Dorsolateral prefrontal cortex (tissue), 120 donors: ENCODE measurements at regions of chr11 and their contacts with region 1.

Region 1: GRCh38 chr11:73542175-73542574 is 55.7 kb downstream of the FAM168A start:
- DNase-seq: no peak
- H3K4me3 ChIP-seq: no peak overlapping the region
- H3K27ac ChIP-seq: no peak overlapping the region
- H3K27me3 ChIP-seq: no peaks in the 10 kb centered on the region
- CTCF ChIP-seq: no peak

Region 2: GRCh38 chr11:72930008-72930407 is 612.2 kb before region 1 on chr11:
- intact Hi-C with region 1: no loop called
- DNase-seq: no peak
- H3K4me3 ChIP-seq: no peak overlapping the region
- H3K27ac ChIP-seq: peak overlapping the region in 2 of 59 donors; percentile 22 to 30
- H3K27me3 ChIP-seq: no peaks in the 10 kb centered on the region
- CTCF ChIP-seq: no peak

Region 3: DNA sequence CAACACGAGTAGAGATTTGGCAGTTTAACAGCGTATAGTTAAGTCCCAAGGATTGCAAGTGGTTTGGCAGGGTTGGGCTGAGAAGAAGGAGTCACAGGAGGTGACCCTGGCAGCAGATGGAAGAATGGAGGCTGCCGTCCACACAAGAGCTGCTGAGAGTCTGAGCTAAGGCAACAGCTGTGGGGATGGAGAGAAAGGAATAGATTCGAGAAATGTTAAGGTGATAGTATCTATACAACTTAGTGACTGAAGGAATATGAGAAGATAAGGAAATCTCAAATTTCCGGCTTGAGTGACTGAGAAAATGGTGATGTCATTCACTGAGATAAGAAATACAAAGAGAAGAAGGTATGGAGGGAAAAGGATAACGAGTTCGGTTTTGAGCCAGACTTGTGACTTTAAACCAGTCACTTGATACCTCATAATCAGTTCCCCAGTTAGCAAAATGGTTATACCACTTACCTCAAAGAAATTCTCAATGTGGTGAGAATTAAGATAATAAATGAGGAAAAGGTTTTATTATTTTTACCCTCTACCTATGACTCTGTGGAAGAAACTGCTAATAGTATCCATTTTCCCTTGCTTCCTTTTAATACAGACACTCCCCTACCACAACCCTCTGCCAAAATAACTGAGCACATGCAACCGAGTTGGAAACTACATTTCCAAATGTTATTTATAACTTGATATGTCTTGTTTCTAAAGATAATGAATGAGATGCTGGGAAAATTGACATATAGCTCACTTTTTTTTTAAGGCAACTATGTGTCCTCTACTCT is 25.0 kb after region 1 on chr11:
- intact Hi-C with region 1: no loop called
- DNase-seq: no peak
- H3K4me3 ChIP-seq: no peak overlapping the region
- H3K27ac ChIP-seq: no peak overlapping the region
- H3K27me3 ChIP-seq: no peaks in the 10 kb centered on the region
- CTCF ChIP-seq: no peak

Region 4: DNA sequence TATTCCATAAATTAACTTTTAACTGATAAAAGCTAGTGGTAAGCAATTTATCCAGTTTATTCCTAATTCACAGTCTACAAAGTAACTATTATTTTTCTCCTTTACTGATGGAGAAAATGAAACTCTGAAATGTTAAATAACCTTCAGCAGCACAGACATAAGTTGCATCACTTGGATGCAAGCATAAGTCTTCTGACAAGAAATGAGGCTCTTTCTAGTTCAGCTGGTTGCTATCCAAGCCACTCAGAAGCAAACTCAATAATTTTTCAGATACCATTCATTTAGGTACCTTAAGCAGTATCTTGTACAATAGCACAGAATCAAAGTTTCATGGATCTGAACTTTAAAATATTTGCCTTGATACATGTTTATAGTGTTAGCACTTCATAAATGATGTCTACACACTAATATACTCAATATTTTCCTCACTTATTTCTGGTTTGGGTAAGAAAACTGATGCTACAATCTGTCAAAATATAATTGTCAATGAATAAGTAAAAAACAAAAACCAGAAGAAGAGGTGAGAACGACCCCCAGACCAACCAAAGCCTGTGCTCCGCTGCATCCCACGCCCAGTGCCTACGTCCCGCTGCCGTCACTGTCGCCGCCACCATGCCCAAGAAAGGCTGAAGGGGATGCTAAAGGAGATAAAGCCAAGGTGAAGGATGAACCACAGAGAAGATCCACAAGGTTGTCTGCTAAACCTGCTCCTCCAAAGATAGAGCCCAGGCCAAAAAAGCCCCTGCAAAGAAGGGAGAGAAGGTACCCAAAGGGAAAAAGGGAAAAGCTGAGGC is 37.7 kb after region 1 on chr11:
- intact Hi-C with region 1: loop called in 1 of 2 experiments (anchors 5 kb)
- DNase-seq: no peak
- H3K4me3 ChIP-seq: no peak overlapping the region
- H3K27ac ChIP-seq: no peak overlapping the region
- H3K27me3 ChIP-seq: no peaks in the 10 kb centered on the region
- CTCF ChIP-seq: no peak